Heart right ventricle (tissue), 16 donors: ENCODE measurements at regions of chr4 and their contacts with region 1.

Region 1: GRCh38 chr4:2617955-2618354 is 81.5 kb downstream of the FAM193A start:
- DNase-seq: no peak
- ATAC-seq: no peak
- H3K4me3 ChIP-seq: no peak overlapping the region
- H3K27ac ChIP-seq: no peak overlapping the region
- H3K4me1 ChIP-seq: peaks cover 0 to 48% (median 27%) of the 10 kb centered on the region in 9 donors
- H3K27me3 ChIP-seq: no peaks in the 10 kb centered on the region
- CTCF ChIP-seq: no peak

Region 2: GRCh38 chr4:1116838-1117237 is 1501.1 kb before region 1 on chr4:
- intact Hi-C with region 1: loop called in 1 of 10 experiments (anchors 5 kb)
- DNase-seq: no peak
- ATAC-seq: no peak
- H3K4me3 ChIP-seq: no peak overlapping the region
- H3K27ac ChIP-seq: no peak overlapping the region
- H3K4me1 ChIP-seq: no peaks in the 10 kb centered on the region
- H3K27me3 ChIP-seq: peaks cover 9 to 47% (median 35%) of the 10 kb centered on the region in 7 donors
- CTCF ChIP-seq: no peak

Region 3: GRCh38 chr4:2552806-2553205 is 65.1 kb before region 1 on chr4:
- intact Hi-C with region 1: loop called in 2 of 10 experiments (anchors 10 kb)
- DNase-seq: no peak
- ATAC-seq: no peak
- H3K4me3 ChIP-seq: no peak overlapping the region
- H3K27ac ChIP-seq: no peak overlapping the region
- H3K4me1 ChIP-seq: peaks cover 0 to 42% (median 22%) of the 10 kb centered on the region in 9 donors
- H3K27me3 ChIP-seq: no peaks in the 10 kb centered on the region
- CTCF ChIP-seq: no peak

Region 4: DNA sequence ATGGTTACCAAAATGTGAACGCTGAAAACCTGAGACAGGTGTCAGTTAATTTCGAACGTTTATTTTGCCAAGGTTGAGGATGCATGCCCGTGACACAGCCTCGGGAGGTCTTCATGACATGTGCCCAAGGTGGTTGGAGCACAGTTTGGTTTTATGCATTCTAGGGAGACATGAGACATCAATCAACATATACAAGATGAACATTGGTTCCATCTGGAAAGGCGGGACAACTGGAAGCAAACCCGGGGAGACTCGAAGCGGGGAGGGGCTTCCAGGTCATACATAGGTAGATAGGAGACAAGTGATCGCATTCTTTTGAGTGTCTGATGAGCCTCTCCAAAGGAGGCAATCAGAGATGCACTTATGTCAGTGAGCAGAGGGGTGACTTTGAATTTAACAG is 164.0 kb after region 1 on chr4:
- intact Hi-C with region 1: no loop called
- DNase-seq: no peak
- ATAC-seq: no peak
- H3K4me3 ChIP-seq: no peak overlapping the region
- H3K27ac ChIP-seq: no peak overlapping the region
- H3K4me1 ChIP-seq: peaks cover 0 to 18% (median 9%) of the 10 kb centered on the region in 9 donors
- H3K27me3 ChIP-seq: no peaks in the 10 kb centered on the region
- CTCF ChIP-seq: no peak

Region 5: DNA sequence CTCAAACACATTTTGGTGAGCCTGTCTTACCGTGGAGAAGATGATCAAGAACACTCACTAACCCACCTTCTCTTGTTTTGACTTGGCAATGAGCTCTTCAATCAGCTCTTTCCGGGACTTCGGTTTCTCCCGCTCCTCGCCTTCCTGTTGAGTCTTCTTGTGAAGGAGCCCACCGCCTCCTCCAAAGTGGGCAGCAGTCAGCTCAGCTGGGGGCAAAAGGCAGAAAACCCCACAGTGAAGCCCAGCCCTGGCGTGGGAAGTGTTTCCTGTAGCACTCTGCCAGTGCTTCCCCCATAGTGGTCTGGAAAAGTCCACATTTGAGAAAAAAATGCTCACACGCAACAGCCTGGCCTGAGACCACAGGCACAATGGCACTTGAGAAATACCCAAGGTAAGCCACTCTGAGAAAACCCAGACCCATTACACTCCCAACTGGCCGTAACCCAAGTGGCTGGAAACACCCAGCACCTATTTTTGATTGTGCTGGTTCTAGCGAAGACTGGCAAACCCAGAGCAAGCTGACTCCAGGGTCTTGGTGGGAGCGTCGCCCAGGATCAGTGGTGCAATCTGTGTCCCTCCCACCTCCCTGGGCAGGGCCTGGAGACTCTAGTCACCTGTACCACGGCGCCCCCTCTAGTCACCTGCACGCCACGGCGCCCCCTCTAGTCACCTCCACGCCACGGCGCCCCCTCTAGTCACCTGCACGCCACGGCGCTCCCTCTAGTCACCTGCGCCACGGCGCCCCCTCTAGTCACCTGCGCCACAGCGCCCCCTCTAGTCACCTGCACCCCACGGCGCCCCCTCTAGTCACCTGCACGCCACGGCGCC is 336.6 kb after region 1 on chr4:
- intact Hi-C with region 1: no loop called
- DNase-seq: no peak
- ATAC-seq: peak in 5 of 8 donors; percentile 21 to 52 (median 46)
- H3K4me3 ChIP-seq: no peak overlapping the region
- H3K27ac ChIP-seq: peak overlapping the region in 2 of 10 donors; percentile 30 to 40
- H3K4me1 ChIP-seq: peaks cover 0 to 16% (median 6%) of the 10 kb centered on the region in 9 donors
- H3K27me3 ChIP-seq: no peaks in the 10 kb centered on the region
- CTCF ChIP-seq: peak in 2 of 9 donors; percentile 21 to 22